ENCODE measurements at regions of chr9 and their contacts with region 1.

Region 1: GRCh38 chr9:13109781-13110180 is 169.7 kb downstream of the MPDZ start:
- DNase-seq: no peak

Region 2: GRCh38 chr9:14030375-14031059 is 920.7 kb after region 1 on chr9:
- intact Hi-C with region 1: loop called in 1 of 2 experiments (anchors 10 kb)
- DNase-seq: no peak

Measured in posterior vena cava (tissue), 2 donors.